MCF 10A (cell line): ENCODE measurements at regions of chr9 and their contacts with region 1.

Region 1: GRCh38 chr9:21070171-21070571 is 7.6 kb downstream of the IFNB1 start:
- DNase-seq: peak; percentile 65
- H3K4me3 Mint-ChIP-seq: no peak overlapping the region
- H3K27ac Mint-ChIP-seq: no peak overlapping the region
- H3K4me1 Mint-ChIP-seq: no peaks in the 10 kb centered on the region
- H3K27me3 Mint-ChIP-seq: no peaks in the 10 kb centered on the region
- CTCF ChIP-seq: peak; percentile 21

Region 2: GRCh38 chr9:20980832-20981455 is 89.2 kb before region 1 on chr9:
- CTCF ChIA-PET with region 1: interaction called, 3 read pairs
- POLR2A ChIA-PET with region 1: no interaction called
- intact Hi-C with region 1: loop called (anchors 10 kb)
- DNase-seq: peak; percentile 41
- H3K4me3 Mint-ChIP-seq: no peak overlapping the region
- H3K27ac Mint-ChIP-seq: peak overlapping the region; percentile 46
- H3K4me1 Mint-ChIP-seq: peaks cover 13% of the 10 kb centered on the region
- H3K27me3 Mint-ChIP-seq: no peaks in the 10 kb centered on the region
- CTCF ChIP-seq: no peak

Region 3: DNA sequence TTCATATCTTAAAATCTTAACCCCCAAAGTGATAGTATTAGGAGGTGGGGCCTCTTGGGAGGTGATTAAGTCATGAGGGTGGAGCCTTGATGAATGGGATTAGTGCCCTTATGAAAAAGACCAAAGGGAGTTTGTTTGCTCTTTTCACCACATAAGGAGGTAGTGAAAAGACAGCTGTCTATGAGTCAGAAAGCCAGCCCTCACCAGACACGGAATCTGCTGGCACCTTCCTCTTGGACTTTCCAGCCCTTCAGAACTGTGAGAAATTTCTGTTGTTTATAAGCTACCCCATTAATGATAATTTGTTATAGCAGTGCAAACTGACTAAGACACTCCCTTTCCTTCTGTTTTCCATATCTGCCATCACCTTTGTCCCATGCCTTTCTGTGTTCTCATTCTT is 13.2 kb before region 1 on chr9:
- CTCF ChIA-PET with region 1: no interaction called
- POLR2A ChIA-PET with region 1: no interaction called
- intact Hi-C with region 1: no loop called
- DNase-seq: peak; percentile 11
- H3K4me3 Mint-ChIP-seq: no peak overlapping the region
- H3K27ac Mint-ChIP-seq: no peak overlapping the region
- H3K4me1 Mint-ChIP-seq: no peaks in the 10 kb centered on the region
- H3K27me3 Mint-ChIP-seq: no peaks in the 10 kb centered on the region
- CTCF ChIP-seq: no peak